A673 (cell line): ENCODE measurements at regions of chr12 and their contacts with region 1.

Region 1: DNA sequence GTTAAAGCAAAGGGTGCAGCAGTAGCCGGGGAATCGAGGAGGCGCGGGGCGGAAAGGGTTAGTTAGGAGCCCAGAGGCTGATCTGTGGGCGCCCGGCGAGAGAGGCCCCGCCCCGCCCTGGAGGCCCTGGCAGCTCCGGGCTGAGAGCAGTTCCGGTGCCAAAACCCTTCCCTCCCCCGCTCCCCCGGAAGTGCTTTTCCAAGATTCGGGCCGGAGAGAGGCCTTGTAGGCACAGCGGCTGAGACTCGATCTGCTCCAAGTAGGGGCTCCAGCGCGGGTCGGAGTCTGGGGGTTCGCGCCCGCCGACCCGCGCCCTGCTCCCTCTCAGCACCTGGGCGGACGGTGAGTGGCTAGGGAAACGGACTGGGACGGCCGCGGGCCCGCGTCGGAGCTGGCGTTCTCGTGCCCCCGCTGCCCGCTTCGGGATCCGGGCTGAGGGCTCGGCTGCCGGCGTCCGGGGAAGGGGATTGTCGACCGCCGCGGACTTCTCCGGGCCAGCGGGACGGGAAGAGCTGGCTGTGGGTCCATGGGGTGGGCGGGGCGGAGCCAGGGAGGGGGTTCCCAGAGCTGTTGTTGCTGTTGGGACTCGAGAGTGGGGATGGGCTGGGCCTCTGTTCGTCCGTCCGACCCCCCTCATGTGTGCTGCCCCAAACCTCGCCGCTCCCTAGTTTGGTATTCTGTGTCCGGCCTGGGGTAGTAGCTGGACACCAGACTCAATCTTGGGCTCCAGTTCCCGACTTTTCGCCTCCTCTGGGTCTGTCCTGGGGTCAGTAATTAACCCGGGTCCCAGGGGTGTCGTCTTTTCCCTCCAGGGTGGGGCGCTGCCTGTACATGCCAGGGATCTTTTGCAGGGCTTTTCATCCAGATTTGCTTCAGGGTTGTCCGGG is at the start of gene FRS2:
- DNase-seq: peak; percentile 96
- H3K4me3 ChIP-seq: peak within 1 kb of the TSS; percentile 90
- H3K27ac ChIP-seq: peak within 1 kb of the TSS; percentile 96
- H3K4me1 ChIP-seq: peaks cover 27% of the 10 kb centered on the region
- H3K27me3 ChIP-seq: no peaks in the 10 kb centered on the region
- CTCF ChIP-seq: peak; percentile 28; the same call in 1 of the 2 replicates
- total RNA-seq, gene FRS2: 34.2 and 34.5 TPM in 2 replicates

Region 2: DNA sequence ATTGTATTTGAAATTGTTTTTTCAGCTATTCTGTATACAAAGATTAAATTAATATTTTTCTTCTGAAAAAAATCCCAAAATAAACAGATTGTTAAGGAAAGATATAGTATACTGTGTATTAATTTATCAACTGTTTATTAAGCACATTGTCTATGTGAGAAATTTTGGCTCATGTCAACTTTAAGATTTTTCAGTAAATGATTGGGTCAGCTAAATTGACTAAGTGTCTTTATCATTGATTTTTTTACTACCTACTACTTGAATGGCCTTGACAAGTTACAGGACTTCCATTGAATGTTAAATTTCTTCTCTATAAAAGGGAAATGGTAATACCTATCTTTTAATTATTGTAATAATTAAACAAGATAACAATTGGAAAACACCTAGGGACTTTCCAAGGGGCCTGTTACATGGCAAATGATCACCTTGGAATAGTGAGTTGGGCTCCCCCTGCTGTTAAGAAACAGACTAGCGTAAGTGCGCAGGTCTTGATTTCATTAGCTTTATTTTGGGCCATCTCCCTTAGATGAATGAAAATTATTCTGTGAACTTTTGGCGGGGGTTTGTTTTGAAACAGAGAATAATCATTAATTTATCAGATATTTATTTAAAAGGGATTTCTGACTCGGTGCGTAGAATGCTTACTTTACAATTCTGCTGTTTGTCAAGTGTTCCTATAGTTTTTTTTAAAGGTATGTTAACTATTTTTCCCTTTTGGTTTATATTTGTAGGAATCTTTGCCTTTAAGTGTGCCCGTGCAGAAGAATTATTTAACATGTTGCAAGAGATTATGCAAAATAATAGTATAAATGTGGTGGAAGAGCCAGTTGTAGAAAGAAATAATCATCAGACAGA is 100.3 kb after region 1 on chr12:
- CTCF ChIA-PET with region 1: interaction called, 3 read pairs
- POLR2A ChIA-PET with region 1: no interaction called
- intact Hi-C with region 1: loop called (anchors 2 kb)
- DNase-seq: peak; percentile 73
- H3K4me3 ChIP-seq: no peak overlapping the region
- H3K27ac ChIP-seq: no peak overlapping the region
- H3K4me1 ChIP-seq: no peaks in the 10 kb centered on the region
- H3K27me3 ChIP-seq: no peaks in the 10 kb centered on the region
- CTCF ChIP-seq: peak; percentile 92